Activated CD4-positive, alpha-beta memory T cell treated with anti-CD3 and anti-CD28 coated beads, Interleukin-2, amount 10 ng/mL, durations not matched to agents 7 days and 5 days (primary cell): ENCODE measurements at regions of chrX and their contacts with region 1.

Region 1: GRCh38 chrX:14029425-14030173 is at the start of gene GEMIN8:
- DNase-seq: peak; percentile 86
- H3K4me3 Mint-ChIP-seq: peak within 1 kb of the TSS; percentile 99
- H3K27ac Mint-ChIP-seq: peak within 1 kb of the TSS; percentile 98
- H3K4me1 Mint-ChIP-seq: peaks cover 47% of the 10 kb centered on the region
- H3K27me3 Mint-ChIP-seq: peaks cover 4% of the 10 kb centered on the region
- total RNA-seq, gene GEMIN8: 14.3 to 16.0 TPM

Region 2: GRCh38 chrX:13506574-13506973 is 523.0 kb before region 1 on chrX:
- CTCF ChIA-PET with region 1: interaction called, 19 read pairs
- POLR2A ChIA-PET with region 1: no interaction called
- DNase-seq: peak; percentile 57
- H3K4me3 Mint-ChIP-seq: no peak overlapping the region
- H3K27ac Mint-ChIP-seq: no peak overlapping the region
- H3K4me1 Mint-ChIP-seq: peaks cover 8% of the 10 kb centered on the region
- H3K27me3 Mint-ChIP-seq: no peaks in the 10 kb centered on the region

Region 3: GRCh38 chrX:13653022-13653693 is 376.4 kb before region 1 on chrX and contains the start of gene TCEANC:
- CTCF ChIA-PET with region 1: interaction called, 5 read pairs
- POLR2A ChIA-PET with region 1: interaction called, 15 read pairs
- DNase-seq: peak; percentile 94
- H3K4me3 Mint-ChIP-seq: peak within 1 kb of the TSS; percentile 85
- H3K27ac Mint-ChIP-seq: peak within 1 kb of the TSS; percentile 96
- H3K4me1 Mint-ChIP-seq: peaks cover 28% of the 10 kb centered on the region
- H3K27me3 Mint-ChIP-seq: no peaks in the 10 kb centered on the region
- total RNA-seq, gene TCEANC: 4.3 to 4.6 TPM

Region 4: DNA sequence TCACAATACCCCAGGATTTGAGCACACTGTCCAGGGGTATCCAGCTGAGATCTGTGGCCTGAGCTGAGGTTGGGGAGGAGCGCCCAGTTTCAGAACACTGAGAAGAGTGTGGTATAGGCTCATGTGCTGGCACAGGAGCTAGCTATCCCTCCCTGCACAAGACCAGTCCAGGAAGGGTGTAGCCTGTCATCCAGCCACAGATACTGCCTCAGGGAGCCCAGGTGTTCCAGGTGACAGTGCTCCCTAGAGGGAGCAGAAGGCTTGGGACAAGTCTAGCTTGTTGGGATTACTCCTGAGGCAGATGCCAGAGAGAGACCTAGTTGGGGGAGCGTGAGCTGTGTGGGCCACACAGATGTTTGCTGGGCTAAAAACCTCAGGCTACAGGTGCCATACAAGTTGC is 420.2 kb after region 1 on chrX:
- CTCF ChIA-PET with region 1: no interaction called
- POLR2A ChIA-PET with region 1: no interaction called
- DNase-seq: no peak
- H3K4me3 Mint-ChIP-seq: no peak overlapping the region
- H3K27ac Mint-ChIP-seq: no peak overlapping the region
- H3K4me1 Mint-ChIP-seq: no peaks in the 10 kb centered on the region
- H3K27me3 Mint-ChIP-seq: no peaks in the 10 kb centered on the region